AG04449 (cell line): ENCODE measurements at regions of chr11 and their contacts with region 1.

Region 1: DNA sequence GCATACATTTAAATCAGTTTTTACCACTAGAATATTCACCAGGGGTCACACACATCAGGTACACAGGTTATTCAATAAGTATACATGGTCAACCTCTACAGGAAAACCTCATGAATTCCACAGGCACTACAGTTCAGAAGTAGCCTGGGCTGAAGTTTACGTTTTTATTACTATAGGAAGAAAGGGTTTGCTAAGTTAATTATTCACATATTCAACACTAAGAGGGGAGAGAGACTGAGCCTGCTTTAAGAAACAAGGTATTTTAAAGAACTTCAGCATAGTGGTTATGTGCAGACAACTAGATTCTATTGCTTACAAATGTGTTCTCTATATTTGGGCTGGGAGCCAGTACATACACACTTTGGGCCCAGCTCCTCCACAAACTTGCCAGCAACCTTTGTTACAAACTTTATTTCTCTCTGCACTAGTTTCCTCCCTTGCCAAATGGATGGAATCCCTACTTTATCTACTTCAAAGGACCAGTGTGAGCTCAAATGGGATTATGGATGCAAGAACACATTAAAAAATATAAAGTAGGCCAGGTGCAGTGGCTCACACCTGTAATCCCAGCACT is 31.9 kb downstream of the IL18BP start:
- DNase-seq: no peak
- H3K4me3 ChIP-seq: no peak overlapping the region
- CTCF ChIP-seq: no peak

Region 2: GRCh38 chr11:72040726-72041441 is 10.3 kb after region 1 on chr11:
- CTCF ChIA-PET with region 1: interaction called, 38 read pairs
- POLR2A ChIA-PET with region 1: interaction called, 5 read pairs
- DNase-seq: peak; percentile 77
- H3K4me3 ChIP-seq: peak overlapping the region; percentile 63
- CTCF ChIP-seq: no peak

Region 3: GRCh38 chr11:72058416-72059034 is 28.0 kb after region 1 on chr11:
- CTCF ChIA-PET with region 1: interaction called, 20 read pairs
- POLR2A ChIA-PET with region 1: no interaction called
- DNase-seq: peak; percentile 82
- H3K4me3 ChIP-seq: no peak overlapping the region
- CTCF ChIP-seq: no peak

Region 4: GRCh38 chr11:72079827-72080255 is 49.3 kb after region 1 on chr11:
- CTCF ChIA-PET with region 1: interaction called, 71 read pairs
- POLR2A ChIA-PET with region 1: no interaction called
- DNase-seq: no peak
- H3K4me3 ChIP-seq: peak overlapping the region; percentile 71
- CTCF ChIP-seq: no peak

Region 5: GRCh38 chr11:72222907-72223614 is 192.5 kb after region 1 on chr11:
- CTCF ChIA-PET with region 1: interaction called, 24 read pairs
- POLR2A ChIA-PET with region 1: no interaction called
- DNase-seq: no peak
- H3K4me3 ChIP-seq: peak overlapping the region; percentile 91
- CTCF ChIP-seq: peak; percentile 35